ENCODE measurements at regions of chr2 and their contacts with region 1.

Region 1: DNA sequence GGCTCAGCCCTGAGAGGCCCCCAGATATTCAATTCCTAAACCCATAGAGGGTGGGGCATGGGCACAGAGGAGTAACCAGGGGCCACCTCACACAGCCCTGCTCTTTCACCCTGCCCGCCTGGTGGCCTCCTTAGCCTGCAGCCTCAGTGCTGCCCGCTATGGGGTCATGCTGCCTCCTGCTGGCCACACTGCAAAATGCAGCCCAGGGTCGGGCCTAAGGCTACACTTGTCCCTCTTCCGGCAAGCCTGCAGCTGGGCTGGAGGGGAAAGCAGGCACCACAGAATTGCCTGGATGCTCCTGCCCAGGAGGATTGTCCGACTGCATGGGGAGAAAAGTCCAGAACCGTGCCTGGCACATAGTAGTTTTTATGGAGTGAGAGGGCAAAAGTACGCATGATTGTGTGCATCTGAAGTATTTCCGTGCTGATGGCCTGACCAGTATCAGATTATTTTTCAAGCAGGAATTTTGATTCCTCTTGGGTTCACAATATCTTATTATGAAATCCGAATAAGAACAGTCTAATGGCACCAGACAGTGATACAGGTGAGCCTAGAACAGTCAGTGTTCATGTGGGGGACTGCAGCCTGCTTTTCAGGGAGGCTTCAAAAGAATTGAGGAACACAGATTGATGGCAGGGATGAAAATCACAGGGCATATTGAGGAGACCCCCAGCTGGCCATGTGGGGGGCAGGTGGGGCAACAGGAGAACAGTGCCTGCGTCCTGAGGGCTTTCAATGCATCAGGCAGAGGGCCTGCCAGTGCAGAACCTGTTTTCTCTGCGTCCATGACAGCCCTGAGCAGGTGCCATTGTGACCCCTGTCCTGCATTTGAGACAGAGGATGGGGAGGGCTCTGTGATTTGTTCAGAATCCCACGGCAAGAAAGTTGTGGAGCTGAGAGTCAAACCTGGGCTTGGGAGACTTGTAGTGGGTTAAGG is 51.2 kb upstream of the ALPP start:
- DNase-seq: peak; percentile 92
- ATAC-seq: peak; percentile 89
- H3K4me3 Mint-ChIP-seq: no peak overlapping the region
- H3K27ac Mint-ChIP-seq: no peak overlapping the region
- H3K4me1 Mint-ChIP-seq: peaks cover 9% of the 10 kb centered on the region
- H3K27me3 Mint-ChIP-seq: no peaks in the 10 kb centered on the region

Region 2: GRCh38 chr2:231910771-231911170 is 416.6 kb before region 1 on chr2:
- CTCF ChIA-PET with region 1: interaction called, 4 read pairs
- POLR2A ChIA-PET with region 1: no interaction called
- intact Hi-C with region 1: loop called (anchors 1 to 2 kb)
- DNase-seq: no peak
- ATAC-seq: no peak
- H3K4me3 Mint-ChIP-seq: no peak overlapping the region
- H3K27ac Mint-ChIP-seq: no peak overlapping the region
- H3K4me1 Mint-ChIP-seq: peaks cover 13% of the 10 kb centered on the region
- H3K27me3 Mint-ChIP-seq: no peaks in the 10 kb centered on the region

Region 3: DNA sequence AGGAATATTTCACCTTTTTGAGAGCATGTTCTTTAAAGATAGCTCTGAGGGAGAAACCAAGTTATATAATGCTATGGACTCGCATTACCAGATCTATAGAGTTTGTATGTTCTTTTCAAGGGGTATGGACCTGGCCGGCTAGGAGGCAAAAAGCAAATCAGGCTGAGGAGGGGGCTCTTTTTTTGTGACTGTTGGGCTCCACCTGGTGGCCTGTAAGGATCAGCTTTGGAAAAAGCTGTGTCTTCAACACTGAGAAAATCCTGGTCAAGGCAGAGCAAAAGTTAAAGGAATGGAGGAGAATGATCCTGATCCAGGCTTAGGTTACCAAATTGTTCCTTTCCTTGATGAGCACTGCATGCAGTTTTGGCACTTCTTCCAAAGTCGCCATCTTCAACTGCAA is 185.3 kb before region 1 on chr2:
- CTCF ChIA-PET with region 1: no interaction called
- POLR2A ChIA-PET with region 1: no interaction called
- intact Hi-C with region 1: loop called (anchors 5 to 10 kb)
- DNase-seq: peak; percentile 61
- ATAC-seq: peak; percentile 57
- H3K4me3 Mint-ChIP-seq: no peak overlapping the region
- H3K27ac Mint-ChIP-seq: no peak overlapping the region
- H3K4me1 Mint-ChIP-seq: peaks cover 37% of the 10 kb centered on the region
- H3K27me3 Mint-ChIP-seq: no peaks in the 10 kb centered on the region

Region 4: DNA sequence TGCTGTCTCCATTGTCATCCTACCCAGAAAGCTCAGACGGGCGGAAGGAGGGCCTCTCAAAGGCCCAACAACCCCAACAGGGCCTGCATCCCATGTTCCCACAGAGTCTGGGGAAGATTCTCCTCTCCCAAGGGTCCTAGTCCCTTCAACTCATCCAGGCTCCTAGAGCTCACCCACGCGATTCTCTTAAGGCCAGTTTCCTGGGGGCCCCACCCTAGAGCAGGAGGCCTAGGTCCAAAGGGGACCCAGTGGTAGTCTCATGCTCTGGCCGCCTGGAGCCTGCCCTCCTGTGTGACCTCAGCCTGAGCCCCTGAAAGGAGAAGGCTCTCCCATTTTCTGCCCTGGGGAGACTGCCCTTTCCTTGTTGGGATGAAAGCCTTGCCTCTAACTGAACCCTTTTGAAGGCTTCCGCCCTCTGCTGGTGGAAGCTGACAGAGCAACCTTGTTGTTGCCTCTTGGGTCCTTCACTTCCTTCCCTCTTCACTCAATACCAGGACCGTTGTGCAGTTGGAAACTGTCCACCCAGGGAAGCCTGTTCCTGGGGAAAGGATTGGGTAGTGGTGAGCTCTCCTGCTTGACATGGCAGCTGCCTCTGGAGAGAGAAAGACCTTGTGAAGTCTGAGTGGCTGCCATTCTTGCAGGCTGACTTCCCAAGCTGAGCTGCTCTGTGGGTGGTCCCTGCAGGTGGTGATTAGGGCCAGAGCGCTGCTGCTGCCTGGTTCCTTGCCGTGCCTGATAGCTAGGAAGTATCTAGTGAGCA is 34.8 kb before region 1 on chr2:
- CTCF ChIA-PET with region 1: interaction called, 4 read pairs
- POLR2A ChIA-PET with region 1: no interaction called
- intact Hi-C with region 1: loop called in 1 of 2 experiments (anchors 5 kb)
- DNase-seq: peak; percentile 79
- ATAC-seq: peak; percentile 77
- H3K4me3 Mint-ChIP-seq: no peak overlapping the region
- H3K27ac Mint-ChIP-seq: no peak overlapping the region
- H3K4me1 Mint-ChIP-seq: peaks cover 11% of the 10 kb centered on the region
- H3K27me3 Mint-ChIP-seq: no peaks in the 10 kb centered on the region

Region 5: DNA sequence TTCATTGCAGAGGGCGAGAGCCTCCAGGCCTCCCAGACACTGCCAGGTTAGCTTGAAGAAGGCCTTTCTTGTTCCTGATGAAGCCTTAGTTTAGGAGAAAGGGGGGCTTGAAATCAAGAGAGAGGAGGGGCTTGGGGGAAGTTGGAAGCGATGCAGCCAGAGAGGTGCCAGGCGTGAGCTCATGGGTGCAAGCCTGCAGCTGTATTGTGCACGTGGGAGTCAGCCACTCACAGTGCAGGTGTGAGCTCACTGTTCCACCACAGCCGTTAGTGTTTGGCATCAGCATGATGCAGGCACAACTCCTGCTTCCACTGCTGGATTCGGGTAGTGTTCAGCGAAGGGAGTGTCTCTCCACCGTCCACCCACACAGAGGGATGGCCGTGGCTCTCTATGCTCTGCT is 17.3 kb before region 1 on chr2:
- CTCF ChIA-PET with region 1: interaction called, 22 read pairs
- POLR2A ChIA-PET with region 1: no interaction called
- intact Hi-C with region 1: no loop called
- DNase-seq: peak; percentile 74
- ATAC-seq: peak; percentile 76
- H3K4me3 Mint-ChIP-seq: no peak overlapping the region
- H3K27ac Mint-ChIP-seq: peak overlapping the region; percentile 76
- H3K4me1 Mint-ChIP-seq: peaks cover 68% of the 10 kb centered on the region
- H3K27me3 Mint-ChIP-seq: no peaks in the 10 kb centered on the region

Region 6: DNA sequence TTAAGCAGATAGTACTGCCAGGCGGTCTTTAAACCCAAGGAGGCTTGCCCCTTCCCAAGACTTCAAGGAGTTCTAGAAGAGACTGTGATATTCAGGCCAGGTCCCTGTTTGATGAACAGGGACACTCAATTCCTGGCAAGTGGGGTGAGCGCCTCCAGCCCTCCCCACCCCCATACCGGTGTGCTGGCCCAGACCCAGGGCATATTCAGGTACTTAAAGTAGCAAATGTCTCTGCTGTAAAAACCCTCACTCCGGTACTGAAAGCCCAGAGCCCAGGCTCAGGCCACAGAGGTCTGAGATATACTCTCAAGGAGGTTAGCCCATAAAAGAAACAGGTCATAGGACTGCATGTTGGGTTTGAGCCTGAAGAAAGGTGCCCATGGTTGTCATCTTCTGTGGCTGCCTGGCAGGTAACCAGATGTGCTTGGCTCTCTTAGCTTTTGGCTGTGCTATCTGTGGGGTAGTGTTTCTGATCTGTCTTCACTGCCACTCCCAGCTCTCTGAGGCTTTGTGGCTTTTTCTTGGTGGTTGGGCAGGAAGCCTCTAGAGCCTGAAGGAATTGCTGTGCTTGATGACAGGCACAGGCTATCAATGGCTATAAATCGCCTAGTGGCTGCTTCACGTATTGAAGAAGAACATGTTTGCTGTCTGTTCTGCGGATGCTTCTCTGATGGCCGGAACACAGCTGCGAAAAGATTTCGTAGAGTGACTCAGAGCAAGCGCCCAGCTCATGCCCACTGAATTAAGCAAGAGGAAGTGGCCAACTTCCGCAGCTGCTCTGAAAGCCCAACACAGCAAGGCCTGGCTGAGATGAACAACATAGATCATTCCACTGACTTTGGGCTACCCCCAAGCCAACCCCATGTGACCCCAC is 12.1 kb before region 1 on chr2:
- CTCF ChIA-PET with region 1: interaction called, 22 read pairs
- POLR2A ChIA-PET with region 1: no interaction called
- intact Hi-C with region 1: no loop called
- DNase-seq: peak; percentile 86
- ATAC-seq: peak; percentile 90
- H3K4me3 Mint-ChIP-seq: peak overlapping the region; percentile 42
- H3K27ac Mint-ChIP-seq: peak overlapping the region; percentile 97
- H3K4me1 Mint-ChIP-seq: peaks cover 87% of the 10 kb centered on the region
- H3K27me3 Mint-ChIP-seq: no peaks in the 10 kb centered on the region